BJ (cell line): ENCODE measurements at regions of chr3 and their contacts with region 1.

Region 1: GRCh38 chr3:152524198-152525140 is 255.7 kb downstream of the MBNL1 start:
- DNase-seq: peak; percentile 4
- H3K4me3 ChIP-seq: no peak overlapping the region
- H3K27me3 ChIP-seq: no peaks in the 10 kb centered on the region
- CTCF ChIP-seq: peak; percentile 80

Region 2: DNA sequence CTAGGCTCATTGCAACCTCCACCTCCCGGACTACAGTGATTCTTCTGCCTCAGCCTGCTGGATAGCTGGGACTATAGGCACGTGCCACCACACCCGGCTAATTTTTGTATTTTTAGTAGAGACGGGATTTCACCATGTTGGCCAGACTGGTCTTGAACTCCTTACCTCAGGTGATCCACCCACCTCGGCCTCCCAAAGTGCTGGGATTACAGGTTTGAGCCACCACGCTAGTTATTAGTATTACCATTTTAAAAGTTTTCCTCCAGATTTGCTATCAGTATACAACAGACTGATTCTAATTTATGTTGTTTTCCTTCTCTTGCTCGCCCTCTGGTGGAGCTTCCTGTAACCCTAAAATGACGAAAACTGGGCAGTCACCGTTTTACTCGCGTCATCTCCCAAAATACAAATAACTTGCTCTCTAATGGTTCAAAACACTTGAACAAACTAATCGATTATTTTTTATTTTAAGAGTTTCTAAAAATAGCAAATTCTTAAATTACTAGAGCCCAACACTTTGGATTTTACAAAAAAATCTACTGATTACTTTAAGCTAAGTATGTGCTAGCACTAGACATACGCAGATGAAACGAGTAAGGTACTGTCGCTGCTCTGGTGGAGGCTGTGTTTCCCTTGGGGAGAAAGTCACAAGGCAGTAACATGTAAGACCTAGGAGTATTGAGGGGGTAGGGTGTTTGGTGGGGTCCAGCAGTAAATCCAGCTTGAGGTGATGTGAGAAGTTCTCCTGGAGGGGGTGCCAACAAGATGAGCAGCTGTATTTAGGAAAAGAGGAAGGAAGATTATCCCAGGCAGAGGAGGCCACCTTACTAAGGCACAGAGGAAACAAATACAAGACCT is 52.4 kb before region 1 on chr3:
- CTCF ChIA-PET with region 1: interaction called, 11 read pairs
- POLR2A ChIA-PET with region 1: no interaction called
- DNase-seq: no peak
- H3K4me3 ChIP-seq: no peak overlapping the region
- H3K27me3 ChIP-seq: no peaks in the 10 kb centered on the region
- CTCF ChIP-seq: peak; percentile 74

Region 3: DNA sequence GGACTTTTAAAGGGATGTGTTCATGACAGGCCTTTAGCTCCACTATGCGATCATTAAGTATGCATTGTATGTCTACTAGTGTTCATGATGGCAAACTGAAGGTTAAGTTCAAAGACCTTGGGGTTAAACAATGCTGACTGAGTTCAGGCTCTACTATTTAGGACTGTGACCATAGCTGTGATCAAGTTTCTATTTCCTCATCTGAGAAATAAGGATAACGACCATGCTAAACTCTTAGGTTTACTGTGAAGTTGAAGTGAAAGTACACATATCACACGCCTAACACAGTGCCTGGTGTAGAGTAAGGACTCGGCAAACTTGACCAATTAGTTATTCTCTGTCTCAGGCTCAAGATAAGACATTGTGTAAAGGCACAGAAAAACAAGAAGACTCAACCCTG is 12.6 kb before region 1 on chr3:
- CTCF ChIA-PET with region 1: interaction called, 21 read pairs
- POLR2A ChIA-PET with region 1: no interaction called
- DNase-seq: no peak
- H3K4me3 ChIP-seq: no peak overlapping the region
- H3K27me3 ChIP-seq: no peaks in the 10 kb centered on the region
- CTCF ChIP-seq: no peak

Region 4: GRCh38 chr3:152539191-152539768 is 14.8 kb after region 1 on chr3:
- CTCF ChIA-PET with region 1: interaction called, 10 read pairs
- POLR2A ChIA-PET with region 1: no interaction called
- DNase-seq: no peak
- H3K4me3 ChIP-seq: no peak overlapping the region
- H3K27me3 ChIP-seq: no peaks in the 10 kb centered on the region
- CTCF ChIP-seq: no peak